ENCODE measurements at regions of chr17 and their contacts with region 1.

Region 1: GRCh38 chr17:20992987-20993862 is 49.6 kb downstream of the USP22 start:
- DNase-seq: peak; percentile 87
- CTCF ChIP-seq: peak; percentile 91

Region 2: DNA sequence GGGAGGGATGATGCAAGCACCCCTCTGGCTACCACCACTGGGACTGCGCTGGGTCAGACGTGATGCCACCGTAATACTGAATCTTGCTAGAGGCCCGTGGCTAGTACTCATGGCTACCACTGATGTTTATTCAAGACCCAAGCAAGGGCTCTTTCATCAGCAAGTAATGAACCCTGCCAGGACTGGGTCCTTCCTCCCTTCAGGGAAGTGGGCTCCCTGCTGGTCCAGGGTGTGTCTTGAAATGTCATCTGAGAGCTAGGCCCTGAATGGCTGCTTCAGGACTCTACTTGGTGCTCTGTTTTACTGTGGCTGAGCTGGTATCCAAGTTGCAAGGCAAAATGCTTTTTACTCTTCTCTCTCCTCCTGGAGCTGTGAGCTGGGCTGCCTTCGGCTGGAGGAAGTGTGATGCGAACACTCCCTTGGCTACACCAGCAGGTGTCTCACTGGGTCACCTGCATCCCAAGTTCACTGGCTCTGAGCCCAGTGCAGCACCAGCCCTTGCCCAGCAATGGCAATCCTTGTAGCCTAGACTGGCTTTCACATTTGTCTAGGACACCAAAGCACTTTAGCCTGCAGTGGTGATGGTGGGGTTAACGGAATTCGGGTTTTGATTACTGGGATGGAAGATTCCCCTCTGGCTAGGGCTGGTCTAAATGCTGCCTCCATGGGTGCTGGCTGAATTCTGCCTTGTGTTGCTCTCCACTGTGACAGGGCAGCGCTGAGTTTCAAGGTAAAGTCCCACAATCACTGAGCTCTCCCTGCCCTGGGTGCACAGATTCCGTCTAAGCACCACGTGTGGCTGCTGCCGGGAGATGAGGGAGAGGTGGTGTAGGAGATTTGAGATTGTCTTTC is 49.0 kb before region 1 on chr17:
- CTCF ChIA-PET with region 1: interaction called, 13 read pairs
- POLR2A ChIA-PET with region 1: no interaction called
- DNase-seq: peak; percentile 33
- CTCF ChIP-seq: peak; percentile 51

Region 3: GRCh38 chr17:20975566-20975965 is 17.7 kb before region 1 on chr17:
- CTCF ChIA-PET with region 1: interaction called, 28 read pairs
- POLR2A ChIA-PET with region 1: no interaction called
- DNase-seq: no peak
- CTCF ChIP-seq: no peak

Region 4: GRCh38 chr17:21025451-21025850 is 32.2 kb after region 1 on chr17:
- CTCF ChIA-PET with region 1: interaction called, 10 read pairs
- POLR2A ChIA-PET with region 1: no interaction called
- DNase-seq: no peak
- CTCF ChIP-seq: no peak

Region 5: DNA sequence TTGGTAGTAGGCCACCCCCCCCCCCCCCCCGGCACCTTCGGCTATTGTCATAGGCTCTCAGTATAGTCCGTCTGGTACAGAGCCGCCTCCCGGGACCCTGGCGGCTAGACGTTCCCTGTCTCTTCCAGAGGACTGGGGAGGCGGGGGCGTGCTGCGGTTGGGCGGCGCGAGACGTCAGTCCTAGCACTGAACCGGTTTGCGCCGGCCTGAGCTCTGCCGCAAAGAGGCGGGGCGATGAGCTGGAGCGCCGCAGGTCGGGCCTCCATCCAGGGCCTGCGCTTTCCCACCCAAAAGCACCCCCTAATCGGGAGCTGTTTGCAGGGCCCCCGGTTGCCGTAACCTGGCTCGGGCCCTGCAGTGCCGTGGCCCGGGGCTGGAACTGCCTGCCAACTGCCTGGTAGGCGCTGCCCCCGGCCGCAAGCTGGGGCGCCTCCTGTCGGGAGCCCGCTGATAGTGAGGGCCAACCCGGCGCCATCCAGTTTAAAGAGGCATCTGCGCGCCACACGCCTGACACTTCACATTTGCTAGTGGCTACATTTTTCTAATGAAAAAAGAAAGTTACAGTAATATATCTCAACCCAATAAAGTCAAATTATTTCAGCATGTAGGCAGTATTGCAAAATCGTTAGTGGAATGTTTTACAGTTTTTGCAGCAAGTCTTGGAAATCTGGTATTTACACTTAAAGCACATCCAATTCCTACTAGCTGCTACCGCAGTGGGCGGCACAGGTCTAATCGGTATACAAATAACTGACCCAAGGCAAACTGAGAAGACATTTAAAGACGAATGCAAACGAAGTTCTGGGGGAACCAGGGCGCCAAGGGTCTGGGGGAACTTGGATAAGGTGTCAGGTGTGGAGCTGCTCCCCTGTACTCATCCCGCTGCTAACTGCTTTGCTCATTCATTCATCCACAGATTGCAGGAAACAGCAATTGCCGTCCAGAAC is 50.3 kb after region 1 on chr17:
- CTCF ChIA-PET with region 1: no interaction called
- POLR2A ChIA-PET with region 1: no interaction called
- DNase-seq: no peak
- CTCF ChIP-seq: peak; percentile 81

Region 6: DNA sequence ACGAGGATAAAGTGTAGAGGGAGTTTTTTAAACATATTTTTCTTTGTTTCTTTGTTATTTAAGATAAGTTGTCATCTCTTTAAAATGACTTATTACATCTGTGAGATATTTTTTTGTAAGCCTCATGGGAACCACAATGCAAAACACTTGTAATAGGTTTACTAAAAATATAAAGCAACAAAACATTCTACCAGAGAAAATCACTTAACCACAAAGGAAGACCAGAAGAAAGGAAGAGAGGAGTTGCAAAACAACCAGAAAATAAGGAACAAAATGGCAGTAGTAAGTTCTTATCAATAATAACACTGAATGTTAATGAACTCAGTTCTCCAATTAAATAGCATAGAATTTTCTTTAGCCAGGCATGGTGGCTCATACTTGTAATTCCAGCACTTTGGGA is 156.4 kb after region 1 on chr17:
- CTCF ChIA-PET with region 1: no interaction called
- POLR2A ChIA-PET with region 1: no interaction called
- DNase-seq: no peak
- CTCF ChIP-seq: no peak